Adrenal gland (tissue), 19 donors: ENCODE measurements at regions of chr2 and their contacts with region 1.

Region 1: GRCh38 chr2:85288244-85288725 is 39.5 kb downstream of the TGOLN2 start:
- DNase-seq: no peak
- H3K4me3 ChIP-seq: no peak overlapping the region
- H3K27ac ChIP-seq: no peak overlapping the region
- H3K4me1 ChIP-seq: no peaks in the 10 kb centered on the region
- H3K27me3 ChIP-seq: no peaks in the 10 kb centered on the region
- CTCF ChIP-seq: no peak
- POLR2A ChIP-seq: no peak

Region 2: DNA sequence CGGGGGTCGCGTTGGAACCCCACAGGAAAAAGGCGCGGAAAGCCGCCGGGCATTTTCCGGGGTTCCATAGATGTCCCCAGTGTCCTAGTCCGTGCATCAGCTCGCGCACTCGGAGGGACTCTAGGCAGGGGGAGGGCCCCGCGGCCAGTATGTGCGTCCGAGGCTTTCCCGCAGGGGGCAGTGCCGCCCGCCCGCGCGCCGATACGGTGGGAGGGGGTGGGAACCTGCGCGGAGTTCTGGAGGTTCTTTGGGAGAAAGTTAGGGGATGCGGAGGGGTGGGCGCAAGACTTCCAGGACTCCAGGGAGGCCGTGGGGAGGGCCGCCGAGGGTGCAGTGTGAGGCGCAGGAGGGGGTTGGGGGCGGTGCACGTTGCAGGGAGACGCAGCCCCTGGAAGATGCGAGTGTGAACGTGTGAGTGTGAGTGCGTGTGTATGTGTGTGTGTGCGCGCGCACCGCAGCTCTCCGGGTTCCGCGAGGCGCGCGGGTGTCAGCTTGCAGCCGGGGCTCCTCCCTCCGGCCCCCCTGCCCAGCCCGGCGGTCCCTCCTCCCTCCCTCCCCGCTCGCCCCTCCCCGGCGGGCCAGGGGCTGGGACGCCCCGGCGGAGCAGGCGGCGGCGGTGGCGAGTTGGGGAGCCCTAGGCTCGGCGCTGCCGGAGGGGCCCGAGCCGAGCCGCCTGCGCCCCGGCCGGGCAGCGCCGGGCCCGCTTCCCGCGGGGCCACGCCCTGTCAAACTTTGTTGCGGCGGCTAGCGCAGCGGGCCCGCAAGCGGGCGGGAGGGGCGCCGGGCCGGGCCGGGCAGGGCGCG is 155.2 kb before region 1 on chr2 and contains the start of gene TCF7L1:
- intact Hi-C with region 1: loop called (anchors 5 kb)
- DNase-seq: peak; percentile 43 to 83 (median 68)
- H3K4me3 ChIP-seq: peak within 1 kb of the TSS in 3 of 4 donors; percentile 45 to 86 (median 78)
- H3K27ac ChIP-seq: peak within 1 kb of the TSS in 3 of 5 donors; percentile 47 to 79 (median 61)
- H3K4me1 ChIP-seq: peaks cover 3 to 8% of the 10 kb centered on the region in 2 donors
- H3K27me3 ChIP-seq: no peaks in the 10 kb centered on the region
- CTCF ChIP-seq: peak; percentile 33 to 75 (median 58)
- POLR2A ChIP-seq: no peak
- total RNA-seq, gene TCF7L1: 0.36 to 6.3 (median 2.9) TPM